CD8-positive, alpha-beta T cell (primary cell): ENCODE measurements at regions of chr9 and their contacts with region 1.

Region 1: DNA sequence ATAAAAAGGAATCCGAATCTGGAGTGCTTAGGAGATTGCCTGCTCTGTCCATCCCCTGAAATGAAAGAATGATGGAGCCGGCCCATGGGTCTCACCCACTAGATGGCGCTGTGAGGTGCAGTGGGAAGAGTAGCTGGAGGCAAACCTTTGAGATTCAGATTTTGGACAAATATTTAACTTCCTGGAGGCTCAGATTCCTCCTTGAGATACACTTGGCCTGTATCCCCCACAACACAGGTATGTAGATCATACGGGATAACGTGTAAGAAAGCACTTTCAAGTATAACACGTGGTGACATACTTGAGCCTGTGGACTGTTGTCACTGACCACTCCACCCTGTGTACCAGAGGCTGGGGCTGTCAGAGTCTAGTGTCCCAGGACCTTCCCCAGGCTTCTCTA is 32.3 kb downstream of the TRMO start:
- DNase-seq: peak; percentile 44 to 77 (median 64)
- ATAC-seq: peak; percentile 77
- H3K4me3 ChIP-seq: no peak overlapping the region
- H3K4me3 Mint-ChIP-seq: no peak overlapping the region
- H3K27ac ChIP-seq: no peak overlapping the region
- H3K27ac Mint-ChIP-seq: peak overlapping the region; percentile 27
- H3K4me1 ChIP-seq: no peaks in the 10 kb centered on the region
- H3K4me1 Mint-ChIP-seq: peaks cover 8% of the 10 kb centered on the region
- H3K27me3 ChIP-seq: no peaks in the 10 kb centered on the region
- H3K27me3 Mint-ChIP-seq: no peaks in the 10 kb centered on the region
- CTCF ChIP-seq: peak; percentile 84

Region 2: DNA sequence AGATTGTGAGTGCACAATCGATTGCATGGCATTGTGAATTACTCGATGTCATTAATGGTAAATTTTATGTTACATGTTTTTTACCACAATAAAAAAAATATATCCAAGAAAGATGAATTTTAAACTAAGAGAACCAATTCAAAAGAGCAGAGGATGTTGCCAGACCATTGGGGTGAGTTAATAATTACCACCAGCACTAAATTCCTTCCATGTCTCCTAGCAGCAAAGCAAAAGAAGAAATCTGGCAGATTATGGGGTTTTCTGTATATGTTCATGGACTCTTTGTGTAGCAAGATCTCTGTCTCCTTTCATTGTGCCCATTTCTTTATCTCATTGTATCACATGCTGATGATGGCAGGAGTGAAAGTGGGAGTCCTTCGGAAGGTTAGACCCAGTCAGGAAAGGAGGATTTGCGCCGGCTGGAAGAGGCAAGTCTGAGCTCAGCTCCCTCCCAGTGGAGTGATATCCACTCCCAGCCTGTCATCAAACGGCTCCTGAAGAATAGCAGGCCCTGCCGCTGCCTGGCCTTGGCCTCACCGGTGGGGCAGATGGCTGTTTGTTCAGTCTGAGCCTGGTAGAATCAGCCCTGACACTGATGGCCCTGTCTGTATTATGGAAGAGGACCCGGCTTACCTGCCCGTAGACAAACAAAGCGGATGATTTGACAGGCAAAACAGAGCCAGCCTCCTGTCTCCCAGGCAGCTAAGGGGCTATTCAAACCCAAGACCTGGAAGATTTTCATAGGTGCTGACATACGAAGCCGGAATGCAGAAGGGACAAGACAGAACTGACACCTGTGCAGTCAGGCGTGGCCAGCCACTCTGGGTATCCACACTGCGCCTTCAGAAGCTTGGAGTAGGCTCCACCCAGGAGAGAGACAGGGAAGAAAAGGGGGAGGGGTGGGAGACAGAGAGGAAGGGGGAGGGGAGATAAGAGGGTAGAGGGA is 58.9 kb before region 1 on chr9:
- CTCF ChIA-PET with region 1: no interaction called
- POLR2A ChIA-PET with region 1: no interaction called
- intact Hi-C with region 1: no loop called
- DNase-seq: no peak
- ATAC-seq: no peak
- H3K4me3 ChIP-seq: no peak overlapping the region
- H3K4me3 Mint-ChIP-seq: no peak overlapping the region
- H3K27ac ChIP-seq: no peak overlapping the region
- H3K27ac Mint-ChIP-seq: no peak overlapping the region
- H3K4me1 ChIP-seq: no peaks in the 10 kb centered on the region
- H3K4me1 Mint-ChIP-seq: no peaks in the 10 kb centered on the region
- H3K27me3 ChIP-seq: no peaks in the 10 kb centered on the region
- H3K27me3 Mint-ChIP-seq: peaks cover 15% of the 10 kb centered on the region
- CTCF ChIP-seq: no peak

Region 3: DNA sequence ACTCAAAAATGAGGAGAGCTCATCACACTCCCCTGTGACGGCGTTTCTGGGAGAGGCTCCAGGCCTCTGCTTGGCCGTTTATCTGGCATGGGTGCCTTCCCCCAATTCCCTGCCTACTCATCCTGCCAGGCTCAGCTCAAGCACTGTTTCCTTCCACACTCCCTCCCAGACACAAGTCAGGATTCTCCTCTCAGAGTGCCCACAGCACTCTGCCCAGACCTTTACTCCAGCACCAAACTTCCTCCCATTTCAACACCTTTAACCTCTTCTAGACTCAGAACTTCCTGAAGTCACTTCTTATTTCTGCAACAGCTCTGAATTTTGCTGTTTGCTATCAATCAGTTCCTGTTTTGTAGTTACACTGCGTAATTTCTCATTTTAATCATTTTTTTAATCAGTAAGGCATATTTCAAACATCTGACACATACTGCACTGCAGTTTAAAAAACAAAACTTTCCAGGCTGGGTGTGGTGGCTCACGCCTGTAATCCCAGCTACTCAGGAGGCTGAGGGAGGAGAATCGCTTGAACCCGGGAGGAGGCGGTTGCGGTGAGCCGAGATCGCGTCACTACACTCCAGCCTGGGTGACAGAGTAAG is 16.3 kb after region 1 on chr9:
- CTCF ChIA-PET with region 1: interaction called, 193 read pairs
- POLR2A ChIA-PET with region 1: interaction called, 7 read pairs
- intact Hi-C with region 1: loop called (anchors 1 kb)
- DNase-seq: peak in 4 of 9 experiments; percentile 56 to 78 (median 68)
- ATAC-seq: peak; percentile 26
- H3K4me3 ChIP-seq: peak overlapping the region; percentile 4 to 34
- H3K4me3 Mint-ChIP-seq: peak overlapping the region; percentile 80
- H3K27ac ChIP-seq: peak overlapping the region; percentile 54 to 79
- H3K27ac Mint-ChIP-seq: peak overlapping the region; percentile 97
- H3K4me1 ChIP-seq: peaks cover 92% of the 10 kb centered on the region
- H3K4me1 Mint-ChIP-seq: peaks cover 88% of the 10 kb centered on the region
- H3K27me3 ChIP-seq: no peaks in the 10 kb centered on the region
- H3K27me3 Mint-ChIP-seq: no peaks in the 10 kb centered on the region
- CTCF ChIP-seq: no peak

Region 4: GRCh38 chr9:97911970-97912369 is 21.9 kb after region 1 on chr9:
- CTCF ChIA-PET with region 1: interaction called, 193 read pairs
- POLR2A ChIA-PET with region 1: interaction called, 3 read pairs
- intact Hi-C with region 1: no loop called
- DNase-seq: no peak
- ATAC-seq: no peak
- H3K4me3 ChIP-seq: no peak overlapping the region
- H3K4me3 Mint-ChIP-seq: no peak overlapping the region
- H3K27ac ChIP-seq: peak overlapping the region in 1 of 2 experiments; percentile 5
- H3K27ac Mint-ChIP-seq: peak overlapping the region; percentile 90
- H3K4me1 ChIP-seq: peaks cover 57% of the 10 kb centered on the region
- H3K4me1 Mint-ChIP-seq: peaks cover 83% of the 10 kb centered on the region
- H3K27me3 ChIP-seq: no peaks in the 10 kb centered on the region
- H3K27me3 Mint-ChIP-seq: no peaks in the 10 kb centered on the region
- CTCF ChIP-seq: no peak

Region 5: DNA sequence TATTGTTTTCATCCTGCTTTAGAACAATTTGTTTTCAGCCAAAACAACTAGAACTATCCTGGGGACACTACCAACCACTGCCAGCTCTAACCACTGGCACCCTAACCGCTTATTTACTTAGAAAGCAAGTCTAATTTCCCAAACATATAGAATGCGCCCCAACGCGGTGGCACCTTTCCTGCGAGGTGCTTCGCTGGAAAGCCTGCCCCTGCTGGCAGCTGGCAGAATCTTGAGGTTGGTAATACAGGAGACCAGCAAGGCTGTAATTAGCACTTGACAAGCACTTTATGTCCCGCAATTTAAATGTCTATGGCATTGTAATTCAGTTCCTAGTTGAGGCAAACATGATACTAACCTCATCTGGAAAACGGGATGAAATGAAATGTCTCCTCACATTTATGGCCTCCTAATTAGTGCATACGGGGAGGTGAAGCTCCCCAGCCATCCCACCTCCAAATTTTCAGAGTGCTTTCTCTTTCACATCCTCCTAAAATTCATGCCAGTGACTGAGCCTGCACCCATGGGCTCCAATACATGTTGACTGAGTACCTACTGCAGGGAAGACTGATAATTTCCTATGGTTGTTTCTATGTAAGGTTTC is 788.3 kb after region 1 on chr9:
- CTCF ChIA-PET with region 1: no interaction called
- POLR2A ChIA-PET with region 1: no interaction called
- intact Hi-C with region 1: no loop called
- DNase-seq: peak in 1 of 9 experiments; percentile 3
- ATAC-seq: no peak
- H3K4me3 ChIP-seq: no peak overlapping the region
- H3K4me3 Mint-ChIP-seq: no peak overlapping the region
- H3K27ac ChIP-seq: no peak overlapping the region
- H3K27ac Mint-ChIP-seq: no peak overlapping the region
- H3K4me1 ChIP-seq: no peaks in the 10 kb centered on the region
- H3K4me1 Mint-ChIP-seq: no peaks in the 10 kb centered on the region
- H3K27me3 ChIP-seq: no peaks in the 10 kb centered on the region
- H3K27me3 Mint-ChIP-seq: peaks cover 35% of the 10 kb centered on the region
- CTCF ChIP-seq: no peak